T-cell (primary cell): ENCODE measurements at regions of chr1 and their contacts with region 1.

Region 1: GRCh38 chr1:18681423-18681835 is 50.8 kb downstream of the PAX7 start:
- DNase-seq: peak in 3 of 35 experiments; percentile 3 to 51 (median 8)
- ATAC-seq: peak in 1 of 4 experiments; percentile 43
- H3K4me3 ChIP-seq: no peak overlapping the region
- H3K4me3 Mint-ChIP-seq: no peak overlapping the region
- H3K27ac ChIP-seq: no peak overlapping the region
- H3K27ac Mint-ChIP-seq: no peak overlapping the region
- H3K4me1 ChIP-seq: peaks cover 0 to 6% of the 10 kb centered on the region in 2 experiments
- H3K4me1 Mint-ChIP-seq: no peaks in the 10 kb centered on the region
- H3K27me3 ChIP-seq: peaks cover 0 to 50% of the 10 kb centered on the region in 2 experiments
- H3K27me3 Mint-ChIP-seq: peaks cover 12 to 32% of the 10 kb centered on the region in 2 donors

Region 2: GRCh38 chr1:17494114-17494729 is 1187.2 kb before region 1 on chr1:
- CTCF ChIA-PET with region 1: interaction called in 1 of 2 experiments, 10 read pairs
- POLR2A ChIA-PET with region 1: no interaction called
- DNase-seq: peak; percentile 5 to 68 (median 39)
- ATAC-seq: peak; percentile 44 to 73 (median 62)
- H3K4me3 ChIP-seq: no peak overlapping the region
- H3K4me3 Mint-ChIP-seq: no peak overlapping the region
- H3K27ac ChIP-seq: no peak overlapping the region
- H3K27ac Mint-ChIP-seq: no peak overlapping the region
- H3K4me1 ChIP-seq: no peaks in the 10 kb centered on the region
- H3K4me1 Mint-ChIP-seq: no peaks in the 10 kb centered on the region
- H3K27me3 ChIP-seq: peaks cover 0 to 13% of the 10 kb centered on the region in 2 experiments
- H3K27me3 Mint-ChIP-seq: peaks cover 3 to 7% of the 10 kb centered on the region in 2 donors

Region 3: DNA sequence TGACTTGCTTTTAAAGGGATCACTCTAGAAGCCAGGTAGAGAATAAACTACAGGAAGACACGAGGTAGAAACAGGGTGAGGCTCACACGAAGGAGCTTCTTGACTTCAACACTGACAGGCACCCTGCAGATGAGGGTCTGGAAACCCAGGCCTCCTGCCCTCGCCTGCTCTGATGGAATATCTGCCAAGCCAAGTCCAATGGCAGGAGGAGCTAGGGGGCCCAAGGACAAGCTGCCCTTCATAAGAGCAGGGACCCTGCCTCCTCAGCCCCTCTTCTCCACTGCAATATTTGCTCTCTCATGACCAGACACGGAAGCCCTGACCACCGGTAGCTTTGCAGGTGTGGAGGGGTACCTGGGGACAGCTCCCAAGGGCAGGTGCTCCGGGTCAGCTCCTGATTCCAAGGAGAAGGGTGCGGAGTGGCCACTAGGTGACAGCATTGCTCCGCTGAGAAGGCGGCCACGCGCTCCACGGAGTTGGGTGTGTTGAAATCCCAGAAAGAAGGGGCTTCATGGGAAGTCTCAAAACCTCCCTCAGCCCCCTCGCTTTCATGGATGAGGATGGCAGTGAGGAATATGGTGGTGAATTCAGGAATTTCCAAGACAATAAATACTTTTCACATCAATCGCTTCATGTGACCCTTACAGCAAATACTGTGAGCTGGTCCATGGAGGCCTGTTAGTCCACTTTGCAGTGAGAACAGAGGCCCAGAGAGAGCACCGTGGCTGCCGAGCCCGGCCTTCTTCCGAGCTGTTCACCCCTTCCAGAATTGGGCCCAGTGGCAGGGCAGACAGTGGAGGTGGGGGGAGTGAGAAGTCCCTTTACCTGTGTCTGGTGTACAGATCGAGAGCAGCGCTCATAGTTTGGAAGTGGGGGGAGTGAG is 84.0 kb before region 1 on chr1:
- CTCF ChIA-PET with region 1: interaction called, 6 to 16 read pairs
- POLR2A ChIA-PET with region 1: no interaction called
- DNase-seq: peak in 32 of 35 experiments; percentile 7 to 70 (median 45)
- ATAC-seq: peak; percentile 50 to 70 (median 60)
- H3K4me3 ChIP-seq: no peak overlapping the region
- H3K4me3 Mint-ChIP-seq: no peak overlapping the region
- H3K27ac ChIP-seq: no peak overlapping the region
- H3K27ac Mint-ChIP-seq: no peak overlapping the region
- H3K4me1 ChIP-seq: peaks cover 0 to 7% of the 10 kb centered on the region in 2 experiments
- H3K4me1 Mint-ChIP-seq: peaks cover 0 to 2% (median 0%) of the 10 kb centered on the region in 3 donors
- H3K27me3 ChIP-seq: peaks cover 0 to 44% of the 10 kb centered on the region in 2 experiments
- H3K27me3 Mint-ChIP-seq: peaks cover 27 to 37% of the 10 kb centered on the region in 2 donors

Region 4: DNA sequence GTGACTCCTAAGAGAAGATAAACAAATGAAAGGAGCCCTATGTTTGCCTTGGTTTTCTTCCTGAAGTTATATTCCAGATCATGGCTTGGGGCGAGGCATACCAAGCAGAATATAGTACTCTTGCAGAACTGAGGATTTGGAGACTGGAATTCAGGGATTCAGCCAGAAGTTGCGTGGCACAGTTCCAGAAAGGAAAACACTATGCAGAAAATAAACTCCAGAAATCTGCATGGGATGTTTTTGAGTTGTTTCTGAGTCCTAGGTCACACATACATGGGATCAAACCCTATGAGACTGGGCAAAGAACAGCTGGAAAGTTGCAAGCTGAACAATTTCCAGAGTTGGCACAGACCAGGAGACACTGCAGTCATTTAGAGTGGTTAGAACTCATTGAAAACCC is 317.9 kb after region 1 on chr1:
- CTCF ChIA-PET with region 1: no interaction called
- POLR2A ChIA-PET with region 1: no interaction called
- DNase-seq: no peak
- ATAC-seq: no peak
- H3K4me3 ChIP-seq: no peak overlapping the region
- H3K4me3 Mint-ChIP-seq: no peak overlapping the region
- H3K27ac ChIP-seq: no peak overlapping the region
- H3K27ac Mint-ChIP-seq: no peak overlapping the region
- H3K4me1 ChIP-seq: peaks cover 0 to 7% of the 10 kb centered on the region in 2 experiments
- H3K4me1 Mint-ChIP-seq: peaks cover 3 to 8% (median 5%) of the 10 kb centered on the region in 3 donors
- H3K27me3 ChIP-seq: peaks cover 0 to 22% of the 10 kb centered on the region in 2 experiments
- H3K27me3 Mint-ChIP-seq: peaks cover 0 to 5% of the 10 kb centered on the region in 2 donors